Heart right ventricle (tissue), 16 donors: ENCODE measurements at regions of chr14 and their contacts with region 1.

Region 1: DNA sequence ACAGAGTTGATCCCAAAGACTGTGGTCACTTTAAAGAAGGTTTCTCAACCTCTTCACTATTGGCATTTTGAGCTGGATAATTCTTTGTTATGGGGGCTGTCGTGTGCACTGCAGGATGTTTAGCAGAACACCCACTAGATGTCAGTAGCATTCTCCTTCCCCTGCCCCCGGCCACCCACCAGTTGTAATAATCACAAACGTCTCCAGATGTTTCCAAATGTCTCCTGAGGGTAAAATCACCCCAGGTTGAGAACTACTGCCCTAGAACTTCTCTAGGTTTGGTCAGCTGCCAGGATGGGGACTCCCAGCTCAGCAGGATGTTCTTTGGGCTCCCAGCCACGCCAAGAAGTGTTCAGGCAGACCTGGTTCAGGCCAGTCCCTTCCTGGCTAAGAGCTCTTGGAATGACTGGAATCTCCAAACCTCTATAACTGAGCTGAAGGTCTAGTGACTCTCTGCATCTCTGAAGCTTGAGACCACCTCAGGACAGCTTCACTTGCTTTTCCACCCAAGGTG is 12.5 kb upstream of the AJUBA start:
- DNase-seq: peak in 1 of 2 donors; percentile 38
- ATAC-seq: peak in 7 of 8 donors; percentile 55 to 75 (median 61)
- H3K4me3 ChIP-seq: no peak overlapping the region
- H3K27ac ChIP-seq: no peak overlapping the region
- H3K4me1 ChIP-seq: peaks cover 3 to 25% (median 8%) of the 10 kb centered on the region in 9 donors
- H3K27me3 ChIP-seq: no peaks in the 10 kb centered on the region
- CTCF ChIP-seq: peak in 8 of 9 donors; percentile 28 to 71 (median 62)

Region 2: DNA sequence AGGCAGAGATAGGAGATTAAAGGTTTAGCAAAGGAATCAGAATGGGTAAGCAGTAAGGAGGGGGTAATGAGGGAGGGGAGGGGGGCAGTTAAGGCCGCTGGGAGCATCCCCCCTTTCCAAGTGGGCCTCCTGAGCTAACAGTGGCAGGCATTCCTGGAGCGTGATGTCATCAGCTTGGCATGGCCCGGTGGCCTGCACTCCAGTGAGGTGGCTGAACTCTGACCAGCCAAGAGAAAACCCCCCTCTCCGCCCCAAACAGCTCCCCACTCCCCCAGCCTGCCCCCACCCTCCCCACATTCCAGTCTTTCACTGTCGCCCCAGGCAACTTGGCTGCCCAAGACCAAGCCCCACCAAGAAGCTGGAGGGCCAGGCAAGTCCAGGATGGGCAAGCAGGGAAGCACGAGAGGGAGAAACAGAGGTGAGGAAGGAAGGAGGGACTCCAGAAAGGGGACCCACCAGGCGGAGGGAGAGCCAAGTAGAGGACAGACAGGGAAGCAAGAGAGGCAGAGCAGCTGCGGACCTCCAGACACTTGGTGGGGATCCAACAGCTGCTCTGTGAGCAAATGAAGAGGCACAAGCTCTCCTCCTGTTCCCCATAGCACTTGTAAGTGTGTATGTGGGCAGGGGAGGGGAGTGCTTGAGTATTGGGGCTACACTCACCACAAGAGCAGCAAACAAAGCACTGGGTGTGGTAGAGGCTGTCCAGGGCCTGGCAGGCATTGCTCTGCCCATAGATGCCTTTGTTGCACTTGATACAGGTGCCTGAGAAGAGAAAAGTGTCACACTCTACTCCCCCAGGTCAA is 16.9 kb before region 1 on chr14:
- intact Hi-C with region 1: loop called in 1 of 10 experiments (anchors 1 kb)
- DNase-seq: peak; percentile 44 to 54
- ATAC-seq: peak in 7 of 8 donors; percentile 11 to 60 (median 41)
- H3K4me3 ChIP-seq: no peak overlapping the region
- H3K27ac ChIP-seq: peak overlapping the region in 9 of 10 donors; percentile 24 to 91 (median 78)
- H3K4me1 ChIP-seq: peaks cover 8 to 69% (median 52%) of the 10 kb centered on the region in 9 donors
- H3K27me3 ChIP-seq: peaks cover 0 to 33% (median 0%) of the 10 kb centered on the region in 7 donors
- CTCF ChIP-seq: no peak

Region 3: DNA sequence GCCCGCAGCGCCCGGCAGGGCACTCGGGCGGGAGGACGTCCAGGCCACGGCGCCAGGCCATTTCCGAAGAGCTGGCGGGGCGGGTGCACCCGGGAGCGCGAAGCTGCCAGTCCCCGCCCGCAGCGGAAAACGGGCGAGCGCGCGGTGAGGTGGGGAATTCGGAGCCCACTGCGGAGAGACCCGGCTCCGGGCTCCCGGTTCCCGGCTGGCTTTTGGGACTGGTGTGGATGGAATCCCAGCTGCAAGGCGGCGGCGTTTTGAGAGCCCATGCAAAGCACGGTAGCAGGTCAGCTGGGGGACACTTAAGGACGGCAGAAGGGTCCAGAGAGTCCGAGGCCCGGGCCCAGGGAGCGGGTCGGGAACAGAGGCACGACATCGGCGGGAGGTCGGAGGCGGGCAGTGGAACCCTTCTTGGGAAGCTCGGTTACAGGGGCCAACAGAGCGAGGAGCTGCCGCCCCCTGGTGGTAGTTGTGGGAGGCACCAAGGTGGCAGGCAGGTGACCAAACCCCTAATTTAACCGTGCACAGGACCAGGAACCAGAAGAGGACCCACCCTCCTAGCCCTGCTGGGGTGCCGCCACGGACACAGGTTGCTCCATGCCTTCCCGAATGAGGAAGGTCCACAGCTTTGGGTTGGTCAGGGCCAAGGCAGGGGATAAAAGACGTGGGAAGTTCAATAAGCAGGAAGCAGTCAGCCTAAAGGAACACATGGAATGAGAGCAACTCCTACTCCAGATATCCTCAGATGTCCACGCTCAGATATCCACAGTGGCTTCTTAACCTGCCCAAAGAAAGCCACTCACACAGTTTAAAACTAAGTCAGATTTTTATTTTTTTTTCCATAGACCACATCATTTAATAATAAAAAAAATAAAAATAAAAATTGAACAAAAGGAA is 63.2 kb after region 1 on chr14:
- intact Hi-C with region 1: loop called in 4 of 10 experiments (anchors 1 to 5 kb)
- DNase-seq: peak; percentile 88
- ATAC-seq: peak; percentile 63 to 84 (median 80)
- H3K4me3 ChIP-seq: peak overlapping the region; percentile 48 to 91 (median 72)
- H3K27ac ChIP-seq: peak overlapping the region in 8 of 10 donors; percentile 39 to 68 (median 54)
- H3K4me1 ChIP-seq: peaks cover 5 to 41% (median 25%) of the 10 kb centered on the region in 9 donors
- H3K27me3 ChIP-seq: no peaks in the 10 kb centered on the region
- CTCF ChIP-seq: peak; percentile 94 to 98 (median 96)

Region 4: DNA sequence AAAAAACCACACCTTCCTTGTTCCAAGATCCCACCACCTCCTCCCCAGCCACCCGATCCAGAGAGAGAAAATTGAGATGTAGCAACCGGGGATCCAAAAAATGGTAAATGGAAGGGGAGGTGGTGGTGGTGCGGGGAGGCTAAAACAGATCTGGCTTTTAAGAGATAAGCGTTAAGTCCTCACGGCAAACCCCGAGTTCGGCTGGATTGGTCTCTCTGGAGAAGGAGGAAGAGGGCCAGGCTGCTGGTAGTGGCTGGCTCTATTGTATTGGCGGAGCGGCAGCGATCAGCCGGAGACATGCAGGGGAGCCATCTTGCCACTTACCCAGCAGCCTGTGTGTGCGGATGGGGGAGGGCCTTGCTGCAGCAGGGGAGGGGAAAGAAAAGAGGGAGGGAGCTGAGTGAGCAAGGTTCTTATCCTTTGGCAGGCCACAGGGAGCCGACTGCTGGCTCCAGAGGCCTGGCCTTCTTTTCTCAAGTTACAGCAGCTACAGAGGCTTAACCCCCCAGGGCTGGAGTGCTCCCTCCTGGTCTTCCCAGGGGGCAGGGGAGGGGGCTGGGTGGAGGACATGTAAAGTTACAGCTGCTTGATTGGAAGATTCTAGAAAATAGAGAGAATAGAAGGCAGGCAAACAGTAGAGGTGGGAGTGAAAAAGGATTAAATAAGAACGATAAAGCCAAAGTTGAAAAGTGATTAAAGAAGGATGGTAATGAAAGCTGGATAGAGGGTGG is 76.6 kb after region 1 on chr14:
- intact Hi-C with region 1: no loop called
- DNase-seq: peak; percentile 79 to 87
- ATAC-seq: peak; percentile 88 to 95 (median 94)
- H3K4me3 ChIP-seq: peak overlapping the region; percentile 46 to 70 (median 63)
- H3K27ac ChIP-seq: peak overlapping the region; percentile 37 to 88 (median 84)
- H3K4me1 ChIP-seq: peaks cover 15 to 47% (median 42%) of the 10 kb centered on the region in 9 donors
- H3K27me3 ChIP-seq: no peaks in the 10 kb centered on the region
- CTCF ChIP-seq: no peak